ENCODE measurements at regions of chr14 and their contacts with region 1.

Region 1: GRCh38 chr14:24310646-24311604 is at the start of gene LTB4R:
- DNase-seq: no peak
- ATAC-seq: no peak
- H3K4me3 ChIP-seq: no peak within 1 kb of the TSS
- H3K27ac ChIP-seq: peak within 1 kb of the TSS; percentile 4
- H3K4me1 ChIP-seq: peaks cover 61% of the 10 kb centered on the region
- H3K27me3 ChIP-seq: no peaks in the 10 kb centered on the region; a peak in 1 of 5 replicates
- CTCF ChIP-seq: no peak
- EP300 ChIP-seq: no peak
- POLR2A ChIP-seq: no peak
- RAD21 ChIP-seq: no peak
- total RNA-seq, gene LTB4R: 1.00 and 3.2 TPM in 2 replicates

Region 2: DNA sequence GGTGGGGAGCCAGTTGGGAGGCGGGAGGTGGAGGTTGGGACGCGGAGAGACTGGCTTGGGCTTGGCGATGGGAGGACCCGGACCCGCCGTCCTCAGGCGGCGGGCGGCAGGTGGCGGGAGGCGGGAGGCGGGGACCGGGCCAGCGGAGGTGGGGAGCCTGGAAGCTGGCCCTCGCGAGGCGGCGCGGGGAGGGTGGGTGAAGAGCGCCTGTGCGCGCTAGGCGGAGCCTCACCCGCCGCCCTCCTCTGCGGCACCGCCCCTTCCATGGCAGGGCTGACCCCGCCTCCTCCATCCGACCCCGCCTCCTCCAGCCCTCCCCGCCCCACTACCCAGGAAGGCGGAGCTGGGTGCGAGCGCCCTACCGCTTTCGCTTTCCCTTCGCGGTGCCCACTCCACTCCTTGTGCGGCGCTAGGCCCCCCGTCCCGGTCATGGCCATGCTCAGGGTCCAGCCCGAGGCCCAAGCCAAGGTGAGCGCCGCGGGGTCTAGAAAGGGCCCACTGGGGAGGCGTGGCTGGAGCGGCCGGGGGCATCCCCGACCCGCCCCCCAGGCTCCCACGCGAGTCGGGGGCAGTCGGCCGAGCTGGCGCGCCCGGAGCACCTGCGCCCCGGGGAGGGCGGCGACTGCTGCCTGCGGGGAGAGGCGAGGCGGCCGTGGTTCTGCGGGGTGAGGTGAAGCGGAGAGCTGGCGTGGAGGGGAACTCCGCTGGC is 174.9 kb before region 1 on chr14 and contains the start of gene PSME1:
- CTCF ChIA-PET with region 1: no interaction called
- POLR2A ChIA-PET with region 1: interaction called, 16 read pairs
- in situ Hi-C with region 1: no loop called
- intact Hi-C with region 1: no loop called
- DNase-seq: peak; percentile 93
- ATAC-seq: peak; percentile 86
- H3K4me3 ChIP-seq: peak within 1 kb of the TSS; percentile 91 to 98 (median 93)
- H3K27ac ChIP-seq: peak within 1 kb of the TSS; percentile 75
- H3K4me1 ChIP-seq: peaks cover 64% of the 10 kb centered on the region
- H3K27me3 ChIP-seq: no peaks in the 10 kb centered on the region; a peak in 1 of 5 replicates
- CTCF ChIP-seq: peak; percentile 47; the same call in 1 of the 2 replicates
- EP300 ChIP-seq: peak; percentile 23 to 43; a peak in 1 of 4 replicates
- POLR2A ChIP-seq: peak in 1 of 2 experiments; percentile 31; a peak in 1 of 4 replicates
- RAD21 ChIP-seq: peak; percentile 71
- total RNA-seq, gene PSME1: 608 and 713 TPM in 2 replicates

Region 3: DNA sequence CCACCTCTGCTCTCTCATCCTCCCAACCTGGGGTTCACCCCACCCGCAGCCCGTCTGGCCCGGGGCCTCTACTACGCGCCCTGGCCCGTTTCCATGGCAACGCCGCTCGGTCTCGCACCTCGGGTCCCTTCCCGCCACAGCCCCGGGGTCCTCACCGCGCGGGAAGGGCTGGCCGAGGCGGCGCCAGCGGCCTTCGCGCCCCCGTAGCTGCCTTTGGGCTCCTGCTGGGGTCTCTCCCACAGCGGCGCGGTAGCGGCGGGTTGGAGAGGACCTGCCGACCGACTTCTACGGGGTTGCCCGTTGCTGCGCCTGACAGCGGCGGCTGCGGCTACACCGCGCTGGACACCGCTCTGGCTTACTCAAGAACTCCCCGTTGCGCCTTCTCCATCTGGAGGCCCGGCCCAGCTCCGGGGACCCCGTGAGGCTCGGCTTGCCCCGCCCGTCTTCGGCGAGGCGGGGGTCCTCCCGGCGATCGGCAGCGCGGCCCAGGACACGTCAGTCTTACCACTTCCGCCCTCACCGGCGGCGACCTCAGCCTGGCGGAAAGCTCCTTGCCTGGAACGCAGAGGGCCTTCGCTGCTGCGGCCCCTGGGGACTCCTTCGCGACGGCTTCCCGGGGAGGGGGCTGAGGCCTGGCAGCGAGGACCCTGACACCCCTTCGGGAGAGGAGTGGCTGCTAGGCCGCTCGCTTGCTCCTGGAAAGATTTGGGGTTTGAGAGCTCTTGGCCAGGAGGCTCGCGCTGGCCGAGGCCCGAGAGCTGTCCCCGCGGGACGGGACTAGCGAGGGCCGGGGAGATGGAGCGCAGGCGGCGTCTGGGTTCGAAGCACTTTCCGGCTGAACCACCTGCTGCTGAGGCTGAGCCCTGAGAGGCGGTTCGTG is 115.5 kb before region 1 on chr14 and contains the start of gene TM9SF1:
- CTCF ChIA-PET with region 1: no interaction called
- POLR2A ChIA-PET with region 1: interaction called, 15 read pairs
- in situ Hi-C with region 1: no loop called
- intact Hi-C with region 1: no loop called
- DNase-seq: peak; percentile 93
- ATAC-seq: peak; percentile 94
- H3K4me3 ChIP-seq: peak within 1 kb of the TSS; percentile 79 to 91 (median 85)
- H3K27ac ChIP-seq: peak within 1 kb of the TSS; percentile 84
- H3K4me1 ChIP-seq: peaks cover 65% of the 10 kb centered on the region
- H3K27me3 ChIP-seq: no peaks in the 10 kb centered on the region; a peak in 1 of 5 replicates
- CTCF ChIP-seq: peak; percentile 54
- EP300 ChIP-seq: peak; percentile 7 to 39; a peak in 1 of 4 replicates
- POLR2A ChIP-seq: peak in 1 of 2 experiments; percentile 81; a peak in 2 of 4 replicates
- RAD21 ChIP-seq: peak; percentile 52
- total RNA-seq, gene TM9SF1: 56.4 and 110 TPM in 2 replicates

Region 4: GRCh38 chr14:24332268-24332993 is 21.5 kb after region 1 on chr14:
- CTCF ChIA-PET with region 1: interaction called, 6 read pairs
- POLR2A ChIA-PET with region 1: interaction called, 14 read pairs
- in situ Hi-C with region 1: no loop called
- intact Hi-C with region 1: no loop called
- DNase-seq: peak; percentile 86
- ATAC-seq: peak; percentile 83
- H3K4me3 ChIP-seq: peak overlapping the region; percentile 30 to 70 (median 42)
- H3K27ac ChIP-seq: no peak overlapping the region
- H3K4me1 ChIP-seq: peaks cover 36% of the 10 kb centered on the region
- H3K27me3 ChIP-seq: peaks cover 29 to 86% of the 10 kb centered on the region in 2 experiments
- CTCF ChIP-seq: peak; percentile 97
- EP300 ChIP-seq: 0 out of 4 replicates have a peak, but pooled peaks of 1 of the 2 experiments have one; percentile 19
- POLR2A ChIP-seq: no peak
- RAD21 ChIP-seq: peak; percentile 72

Region 5: GRCh38 chr14:24381363-24382063 is 70.6 kb after region 1 on chr14:
- CTCF ChIA-PET with region 1: no interaction called
- POLR2A ChIA-PET with region 1: no interaction called
- in situ Hi-C with region 1: no loop called
- intact Hi-C with region 1: no loop called
- DNase-seq: no peak
- ATAC-seq: no peak
- H3K4me3 ChIP-seq: no peak overlapping the region
- H3K27ac ChIP-seq: no peak overlapping the region
- H3K4me1 ChIP-seq: peaks cover 19% of the 10 kb centered on the region
- H3K27me3 ChIP-seq: peaks cover 7 to 53% of the 10 kb centered on the region in 2 experiments; a peak in 4 of 5 replicates
- CTCF ChIP-seq: no peak
- EP300 ChIP-seq: no peak
- POLR2A ChIP-seq: no peak
- RAD21 ChIP-seq: no peak

Region 6: GRCh38 chr14:24442273-24443052 is 131.5 kb after region 1 on chr14 and contains the start of gene SDR39U1:
- CTCF ChIA-PET with region 1: no interaction called
- POLR2A ChIA-PET with region 1: interaction called, 43 read pairs
- in situ Hi-C with region 1: no loop called
- intact Hi-C with region 1: no loop called
- DNase-seq: peak; percentile 100
- ATAC-seq: peak; percentile 91
- H3K4me3 ChIP-seq: peak within 1 kb of the TSS; percentile 74 to 98 (median 84)
- H3K27ac ChIP-seq: peak within 1 kb of the TSS; percentile 93
- H3K4me1 ChIP-seq: peaks cover 18% of the 10 kb centered on the region
- H3K27me3 ChIP-seq: peaks cover 0 to 5% of the 10 kb centered on the region in 2 experiments; a peak in 1 of 5 replicates
- CTCF ChIP-seq: peak; percentile 50
- EP300 ChIP-seq: 0 out of 4 replicates have a peak, but pooled peaks have one; percentile 44 to 47
- POLR2A ChIP-seq: peak in 1 of 2 experiments; percentile 98; a peak in 2 of 4 replicates
- RAD21 ChIP-seq: no peak; the same call in 1 of the 2 replicates
- total RNA-seq, gene SDR39U1: 25.0 and 34.4 TPM in 2 replicates

Region 7: DNA sequence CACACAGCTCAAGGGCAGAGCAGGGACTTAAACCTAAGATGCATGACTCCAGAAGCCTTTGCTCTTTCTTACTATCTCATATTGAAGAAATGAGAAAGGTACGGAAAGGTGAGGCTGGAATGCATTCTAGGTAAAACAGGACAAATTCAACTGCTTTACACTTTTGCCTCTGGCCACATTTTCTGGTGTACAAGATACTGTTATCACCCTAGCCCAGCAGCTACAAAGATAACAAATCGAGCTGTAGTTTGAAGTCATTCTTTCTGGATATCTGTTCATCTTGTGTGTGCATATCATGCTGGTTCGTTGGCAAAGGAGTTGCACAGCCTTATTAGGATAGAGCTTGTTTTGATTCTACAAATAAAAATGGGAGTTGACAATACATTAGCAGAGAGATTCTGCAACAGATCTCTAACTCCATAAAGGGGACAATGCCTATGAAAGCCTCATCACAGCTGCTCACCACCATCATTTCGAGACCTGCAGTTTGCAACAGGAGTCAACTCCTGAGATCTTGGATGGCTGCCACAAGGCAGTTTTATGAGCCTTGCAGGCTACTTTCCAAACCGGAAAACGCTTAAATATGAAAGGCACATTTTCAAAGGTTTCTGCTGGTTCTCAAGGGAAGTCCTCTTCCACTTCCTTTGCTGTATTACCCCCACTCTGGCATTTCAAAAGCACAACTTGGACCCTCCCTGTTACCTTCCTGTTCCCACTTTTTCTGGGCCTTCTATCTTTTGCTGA is 674.1 kb after region 1 on chr14:
- CTCF ChIA-PET with region 1: no interaction called
- POLR2A ChIA-PET with region 1: no interaction called
- in situ Hi-C with region 1: no loop called
- intact Hi-C with region 1: no loop called
- DNase-seq: no peak
- ATAC-seq: no peak
- H3K4me3 ChIP-seq: no peak overlapping the region
- H3K27ac ChIP-seq: no peak overlapping the region
- H3K4me1 ChIP-seq: peaks cover 44% of the 10 kb centered on the region
- H3K27me3 ChIP-seq: no peaks in the 10 kb centered on the region
- CTCF ChIP-seq: no peak
- EP300 ChIP-seq: no peak
- POLR2A ChIP-seq: no peak
- RAD21 ChIP-seq: no peak

Measured in HepG2 (cell line).